HEK293 (cell line): ENCODE measurements at regions of chr2 and their contacts with region 1.

Region 1: DNA sequence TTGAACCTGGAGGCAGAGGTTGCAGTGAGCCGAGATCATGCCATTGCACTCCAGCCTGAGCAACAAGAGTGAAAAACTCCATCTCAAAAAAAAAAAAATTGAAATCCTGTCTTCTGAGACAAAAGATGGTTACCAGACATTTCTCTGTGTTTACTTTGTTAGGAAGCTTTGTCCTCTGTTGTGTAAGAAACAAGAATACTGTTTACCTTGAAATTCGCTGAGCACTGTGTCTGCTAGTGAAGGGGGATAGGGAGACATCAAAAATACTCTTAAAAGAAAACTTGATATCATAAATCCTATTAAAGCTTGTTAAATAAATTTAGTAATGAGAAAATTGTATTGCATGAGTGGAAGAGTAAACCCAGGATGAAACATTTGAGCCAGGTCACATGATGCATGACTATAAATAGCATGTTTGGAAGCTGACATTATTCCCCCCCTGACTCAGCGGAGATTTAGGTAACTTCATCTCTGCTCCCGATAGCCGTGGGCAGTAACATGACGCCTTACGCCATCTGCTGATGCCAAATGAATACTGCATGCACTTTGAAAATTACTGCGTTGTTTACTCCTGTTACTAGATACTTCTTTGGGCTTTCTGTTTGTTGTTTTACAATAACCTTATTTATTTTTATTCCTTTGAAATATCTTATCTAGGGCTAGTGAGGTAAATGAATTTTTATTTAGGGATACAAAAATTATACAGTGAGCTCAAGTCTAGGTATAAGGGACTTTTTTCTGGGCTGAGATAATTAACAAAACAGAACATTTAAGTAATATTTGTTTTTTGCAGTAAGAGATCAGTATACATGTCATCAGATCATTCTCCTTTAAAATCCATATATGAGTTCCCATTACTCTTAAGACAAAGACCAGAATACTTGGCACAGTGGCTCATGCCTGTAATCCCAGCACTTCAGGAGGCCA is 134.9 kb downstream of the MAP3K20 start:
- H3K4me3 ChIP-seq: no peak overlapping the region
- H3K27ac ChIP-seq: no peak overlapping the region
- H3K4me1 ChIP-seq: no peaks in the 10 kb centered on the region
- CTCF ChIP-seq: peak; percentile 68

Region 2: DNA sequence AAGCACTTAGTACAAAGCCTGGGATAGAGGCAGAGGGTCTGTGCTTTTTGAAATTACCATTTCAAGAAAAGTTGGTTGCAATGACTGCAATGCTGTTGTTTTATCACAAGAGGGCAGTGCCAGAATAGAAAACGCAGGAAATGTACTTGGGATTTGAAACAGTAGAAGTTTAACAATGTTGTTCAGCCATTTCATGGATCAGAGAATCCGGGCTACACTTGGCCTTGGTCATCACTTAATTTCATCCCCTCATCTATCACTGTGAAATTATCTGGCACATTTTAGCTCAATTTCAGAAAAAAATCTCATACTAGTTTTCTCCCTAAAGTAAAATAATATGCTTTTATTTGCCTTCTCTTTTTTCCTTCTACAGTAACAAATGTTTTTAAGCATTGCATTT is 404.0 kb before region 1 on chr2:
- CTCF ChIA-PET with region 1: interaction called, 10 read pairs
- POLR2A ChIA-PET with region 1: no interaction called
- H3K4me3 ChIP-seq: no peak overlapping the region
- H3K27ac ChIP-seq: no peak overlapping the region
- H3K4me1 ChIP-seq: 0 out of 2 replicates have a peak, but pooled peaks cover 3% of the 10 kb centered on the region
- CTCF ChIP-seq: peak; percentile 71

Region 3: DNA sequence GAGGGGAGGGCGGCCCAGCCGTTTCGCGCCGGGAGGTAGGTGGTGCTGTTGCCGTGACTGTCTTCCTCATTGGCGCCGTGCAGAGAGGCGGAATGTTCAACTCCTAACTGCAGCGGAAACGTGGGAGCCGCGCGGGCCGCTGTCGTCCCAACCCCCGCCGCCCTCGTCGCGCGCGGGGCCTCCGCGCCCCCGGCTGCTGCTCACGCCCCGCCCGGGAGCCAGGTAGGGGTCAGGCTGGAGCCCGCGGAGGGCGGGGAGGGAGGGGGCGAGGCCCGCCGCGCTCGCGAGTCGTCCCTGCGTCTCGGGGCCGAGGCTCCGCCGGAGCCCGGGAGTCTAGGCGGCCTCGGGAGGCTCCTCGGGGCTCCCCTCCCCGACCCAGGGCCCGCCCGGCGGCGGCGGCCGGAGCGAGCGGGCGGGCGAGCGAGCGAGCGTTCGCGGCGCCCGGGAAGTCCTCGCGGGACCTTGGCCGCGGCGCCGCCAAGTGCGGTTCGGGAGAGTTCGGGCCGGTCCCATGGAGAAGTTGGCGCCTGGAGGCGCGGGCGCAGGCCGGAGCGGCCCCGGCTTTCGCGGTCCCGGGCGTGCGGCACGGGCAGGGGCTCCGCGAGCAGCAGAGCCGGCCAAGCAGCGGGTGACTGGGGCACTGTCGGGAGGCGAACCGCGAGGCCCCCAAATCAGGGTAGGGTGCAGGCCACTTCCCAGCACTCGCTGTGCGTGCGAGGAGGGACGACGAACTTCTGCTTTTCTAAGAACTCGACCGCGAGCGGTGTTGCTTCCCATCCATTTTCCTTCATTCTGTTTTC is 134.6 kb before region 1 on chr2 and contains the start of gene MAP3K20:
- CTCF ChIA-PET with region 1: interaction called, 22 read pairs
- POLR2A ChIA-PET with region 1: no interaction called
- H3K4me3 ChIP-seq: peak within 1 kb of the TSS; percentile 88
- H3K27ac ChIP-seq: peak within 1 kb of the TSS; percentile 91
- H3K4me1 ChIP-seq: no peaks in the 10 kb centered on the region
- CTCF ChIP-seq: peak; percentile 80

Region 4: GRCh38 chr2:173090276-173090877 is 120.2 kb before region 1 on chr2:
- CTCF ChIA-PET with region 1: interaction called, 13 read pairs
- POLR2A ChIA-PET with region 1: no interaction called
- H3K4me3 ChIP-seq: no peak overlapping the region
- H3K27ac ChIP-seq: no peak overlapping the region
- H3K4me1 ChIP-seq: no peaks in the 10 kb centered on the region
- CTCF ChIP-seq: no peak

Region 5: DNA sequence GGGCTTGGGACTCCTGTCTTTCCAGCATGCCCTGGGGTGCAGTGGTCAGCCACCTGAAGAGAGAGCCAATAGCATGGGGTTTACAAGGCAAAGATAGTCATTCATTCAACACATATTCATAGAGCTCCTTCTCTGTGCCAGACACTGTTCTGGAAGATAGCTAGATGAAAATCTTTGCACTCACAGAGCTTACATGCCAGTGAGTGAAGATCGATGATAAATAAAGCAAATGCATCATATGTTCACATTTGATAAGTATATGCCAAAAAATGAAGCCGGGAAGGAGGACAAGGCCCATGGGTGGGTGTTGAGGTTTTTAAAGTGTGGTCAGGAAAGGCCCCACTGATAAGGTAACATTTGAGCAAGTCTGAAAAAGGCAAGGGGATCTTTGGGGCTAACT is 13.3 kb after region 1 on chr2:
- CTCF ChIA-PET with region 1: interaction called, 12 read pairs
- POLR2A ChIA-PET with region 1: no interaction called
- H3K4me3 ChIP-seq: no peak overlapping the region
- H3K27ac ChIP-seq: no peak overlapping the region
- H3K4me1 ChIP-seq: no peaks in the 10 kb centered on the region
- CTCF ChIP-seq: no peak

Region 6: DNA sequence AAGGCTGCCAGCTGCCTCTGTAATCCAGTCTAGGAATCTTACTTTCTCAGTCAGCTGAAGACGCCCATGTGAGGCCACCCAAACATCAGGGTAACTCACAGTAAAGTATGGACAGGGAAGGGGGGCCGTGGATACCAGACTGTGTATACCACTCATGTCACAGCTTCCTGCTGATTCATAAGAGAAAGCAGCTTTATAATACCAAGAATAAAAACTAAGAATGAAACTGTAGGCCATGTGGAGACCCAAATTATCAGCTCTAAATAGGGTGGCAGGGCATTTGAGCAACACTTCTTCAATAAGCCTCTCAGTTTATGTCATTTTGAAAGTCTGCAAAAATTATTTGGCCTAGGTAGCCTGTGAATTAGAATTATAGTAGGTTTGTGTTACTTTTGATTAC is 29.1 kb after region 1 on chr2:
- CTCF ChIA-PET with region 1: no interaction called
- POLR2A ChIA-PET with region 1: no interaction called
- H3K4me3 ChIP-seq: no peak overlapping the region
- H3K27ac ChIP-seq: no peak overlapping the region
- H3K4me1 ChIP-seq: no peaks in the 10 kb centered on the region
- CTCF ChIP-seq: no peak